ENCODE measurements at regions of chr1 and their contacts with region 1.

Region 1: DNA sequence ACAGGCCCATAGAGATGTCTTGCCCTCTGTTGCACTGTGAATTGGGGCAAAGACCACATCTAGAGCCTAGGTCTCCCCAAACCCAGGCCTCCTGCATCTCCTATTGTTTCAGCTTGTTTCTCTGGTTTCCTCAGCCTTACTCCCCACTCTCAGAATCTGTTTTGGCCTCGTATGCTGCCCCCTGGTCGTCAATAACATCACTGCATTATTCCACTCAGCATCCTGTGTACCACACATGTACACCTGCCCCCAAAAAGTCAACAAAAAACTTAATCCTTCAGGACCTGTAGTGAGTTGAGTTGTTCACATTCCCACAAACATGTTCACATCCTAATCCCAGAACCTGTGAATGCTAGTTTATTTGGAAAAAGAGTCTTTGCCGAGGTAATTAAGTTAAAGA is 184.8 kb downstream of the BRINP2 start:
- DNase-seq: peak in 5 of 10 donors; percentile 27 to 85 (median 55)

Region 2: DNA sequence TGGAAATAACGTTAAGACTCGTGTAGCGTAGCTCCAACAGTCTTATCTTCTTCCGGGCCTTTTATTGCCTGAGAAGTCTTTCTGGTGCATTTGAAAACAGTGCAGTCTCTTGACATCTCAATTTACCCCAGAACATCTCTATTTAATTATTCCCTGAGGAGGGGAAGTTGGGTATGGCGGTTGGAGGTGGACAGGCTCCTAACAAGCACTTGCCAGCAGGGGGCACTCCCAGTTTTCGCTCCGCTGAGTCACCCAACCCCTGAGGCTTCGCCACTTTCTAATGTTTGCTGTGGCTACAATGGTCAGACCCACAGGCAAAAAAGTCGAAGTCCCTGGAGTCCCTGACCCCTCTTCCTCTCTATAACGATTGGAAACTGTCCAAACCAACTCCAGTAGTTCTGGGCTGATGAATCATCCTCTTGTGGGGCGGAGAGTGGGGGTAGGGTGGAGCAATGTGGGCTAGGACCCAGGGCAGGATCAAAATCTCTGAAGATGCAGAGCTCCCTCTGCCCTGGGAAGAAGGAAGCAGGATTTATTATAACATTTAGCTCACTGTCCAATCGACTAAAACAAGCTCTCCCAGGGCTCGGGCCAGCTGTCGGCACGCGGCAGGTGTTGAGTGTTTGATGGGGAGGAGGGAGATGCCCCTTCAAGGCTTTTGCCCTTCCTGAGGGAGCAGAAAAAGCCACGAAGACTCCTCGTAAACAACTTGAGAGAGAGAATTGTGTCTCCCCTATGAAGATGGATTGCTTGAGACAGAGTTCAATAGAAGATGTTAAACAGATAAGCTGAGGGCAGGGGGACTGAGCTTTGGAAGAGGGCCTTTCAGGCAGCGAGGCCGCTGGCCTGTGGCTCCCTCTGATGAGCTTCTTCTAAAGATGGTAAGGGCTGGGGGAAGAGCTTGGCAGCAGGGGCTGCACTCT is 99.2 kb before region 1 on chr1:
- intact Hi-C with region 1: loop called (anchors 1 kb)
- DNase-seq: peak; percentile 31 to 92 (median 72)

Region 3: DNA sequence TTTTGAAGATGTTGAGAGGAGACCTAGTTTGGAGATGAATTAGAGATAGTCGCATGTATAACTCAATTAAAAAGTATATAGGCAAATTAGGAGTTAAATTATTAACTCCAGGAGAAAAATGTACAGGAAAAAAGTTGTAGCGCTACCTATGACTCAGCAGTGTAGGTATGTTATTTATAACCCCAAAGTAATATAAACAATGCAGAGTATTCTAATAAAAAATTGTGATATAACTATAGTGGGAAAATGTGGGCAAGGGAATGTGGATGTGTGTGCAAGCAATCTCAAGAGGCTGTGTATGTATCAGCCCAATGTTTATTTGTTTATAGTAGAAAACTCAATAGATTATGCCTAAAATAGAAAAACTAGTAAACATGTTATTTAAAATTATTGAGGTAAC is 40.3 kb before region 1 on chr1:
- intact Hi-C with region 1: loop called (anchors 5 kb)
- DNase-seq: no peak

Measured in posterior cingulate gyrus (tissue), 11 donors.